ENCODE measurements at regions of chr6 and their contacts with region 1.

Region 1: DNA sequence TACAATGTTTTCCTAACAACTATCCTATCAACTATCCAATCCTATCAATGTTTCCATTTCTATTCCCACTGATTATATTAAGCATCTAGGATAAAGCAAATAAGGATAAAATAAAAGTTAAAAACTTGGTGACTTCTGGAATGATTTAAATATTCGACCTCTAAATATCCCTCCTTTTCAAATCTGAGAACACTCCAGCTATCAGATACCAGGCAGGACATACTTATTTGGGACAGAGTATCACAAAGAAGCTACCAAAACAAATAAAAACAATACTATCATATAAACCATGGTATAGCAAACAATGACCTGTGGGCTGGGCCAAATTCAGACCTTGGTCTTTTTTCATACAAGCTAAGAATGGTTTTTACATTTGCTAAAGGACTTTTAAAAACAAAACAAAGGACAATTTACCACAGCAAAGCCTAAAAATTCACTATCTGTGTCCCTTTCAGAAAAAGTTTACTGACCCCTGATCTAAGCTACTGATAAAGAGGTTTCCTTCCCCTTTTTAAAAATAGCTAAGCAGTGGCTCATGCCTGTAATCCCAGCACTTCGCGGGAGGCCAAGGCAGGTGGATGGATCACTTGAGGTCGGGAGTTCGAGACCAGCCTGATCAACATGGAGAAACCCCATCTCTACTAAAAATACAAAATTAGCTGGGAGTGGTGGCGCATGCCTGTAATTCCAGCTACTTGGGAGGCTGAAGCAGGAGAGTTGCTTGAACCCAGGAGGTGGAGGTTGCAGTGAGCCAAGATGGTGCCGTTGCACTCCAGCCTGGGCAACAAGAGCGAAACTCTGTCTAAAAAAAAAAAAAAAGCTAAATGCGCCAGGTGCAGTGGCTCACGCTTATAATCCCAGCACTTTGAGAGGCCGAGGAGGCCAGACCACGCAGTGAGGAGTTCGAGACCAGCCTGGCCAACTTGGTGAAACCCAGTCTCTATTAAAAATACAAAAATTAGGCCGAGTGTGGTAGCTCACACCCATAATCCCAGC is 6.0 kb downstream of the NUP153 start:
- DNase-seq: no peak
- ATAC-seq: no peak
- H3K4me3 ChIP-seq: no peak overlapping the region
- H3K4me3 Mint-ChIP-seq: no peak overlapping the region
- H3K27ac ChIP-seq: peak overlapping the region in 1 of 2 experiments; percentile 3
- H3K27ac Mint-ChIP-seq: peak overlapping the region; percentile 74
- H3K4me1 ChIP-seq: peaks cover 34% of the 10 kb centered on the region
- H3K4me1 Mint-ChIP-seq: peaks cover 62% of the 10 kb centered on the region
- H3K27me3 ChIP-seq: no peaks in the 10 kb centered on the region
- H3K27me3 Mint-ChIP-seq: no peaks in the 10 kb centered on the region
- CTCF ChIP-seq: no peak

Region 2: GRCh38 chr6:17666646-17667045 is 34.1 kb before region 1 on chr6:
- CTCF ChIA-PET with region 1: interaction called, 6 read pairs
- POLR2A ChIA-PET with region 1: no interaction called
- intact Hi-C with region 1: loop called (anchors 5 kb)
- DNase-seq: no peak
- ATAC-seq: no peak
- H3K4me3 ChIP-seq: no peak overlapping the region
- H3K4me3 Mint-ChIP-seq: no peak overlapping the region
- H3K27ac ChIP-seq: no peak overlapping the region
- H3K27ac Mint-ChIP-seq: peak overlapping the region; percentile 74
- H3K4me1 ChIP-seq: peaks cover 15% of the 10 kb centered on the region
- H3K4me1 Mint-ChIP-seq: peaks cover 25% of the 10 kb centered on the region
- H3K27me3 ChIP-seq: no peaks in the 10 kb centered on the region
- H3K27me3 Mint-ChIP-seq: no peaks in the 10 kb centered on the region
- CTCF ChIP-seq: no peak

Region 3: DNA sequence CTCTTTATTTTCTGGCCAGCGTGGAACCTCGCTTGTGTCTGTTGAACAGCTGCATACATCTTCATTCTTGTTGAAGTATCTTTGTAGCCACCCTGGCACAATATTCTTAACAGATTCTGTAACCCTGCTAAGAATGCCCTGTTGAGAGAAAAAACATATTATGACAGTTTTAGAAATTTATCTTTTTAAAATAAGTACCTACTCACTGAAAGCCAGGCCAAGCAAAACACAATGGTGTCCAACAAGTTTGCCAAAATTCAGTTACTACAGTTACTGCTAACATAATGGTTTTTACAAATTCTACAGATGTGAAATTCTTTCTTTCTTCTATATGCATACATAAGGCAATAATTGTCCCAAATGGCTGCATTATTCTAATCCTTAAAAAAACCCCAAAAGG is 12.2 kb before region 1 on chr6:
- CTCF ChIA-PET with region 1: interaction called, 33 read pairs
- POLR2A ChIA-PET with region 1: interaction called, 4 read pairs
- intact Hi-C with region 1: loop called in 1 of 2 experiments (anchors 2 kb)
- DNase-seq: no peak
- ATAC-seq: no peak
- H3K4me3 ChIP-seq: no peak overlapping the region
- H3K4me3 Mint-ChIP-seq: no peak overlapping the region
- H3K27ac ChIP-seq: no peak overlapping the region
- H3K27ac Mint-ChIP-seq: no peak overlapping the region
- H3K4me1 ChIP-seq: peaks cover 23% of the 10 kb centered on the region
- H3K4me1 Mint-ChIP-seq: peaks cover 68% of the 10 kb centered on the region
- H3K27me3 ChIP-seq: no peaks in the 10 kb centered on the region
- H3K27me3 Mint-ChIP-seq: no peaks in the 10 kb centered on the region
- CTCF ChIP-seq: no peak

Measured in CD8-positive, alpha-beta T cell (primary cell).